ENCODE measurements at regions of chr15 and their contacts with region 1.

Region 1: GRCh38 chr15:70466895-70467529 is 296.3 kb downstream of the UACA start:
- DNase-seq: peak; percentile 79 to 88
- ATAC-seq: peak; percentile 93 to 96
- H3K4me3 ChIP-seq: no peak overlapping the region
- H3K27ac ChIP-seq: 0 out of 6 replicates have a peak overlapping the region, but pooled peaks of 1 of the 2 experiments have one; percentile 7
- H3K4me1 ChIP-seq: peaks cover 13% of the 10 kb centered on the region; the same call in 2 of the 3 replicates
- CTCF ChIP-seq: peak; percentile 84
- EP300 ChIP-seq: no peak
- POLR2A ChIP-seq: no peak
- RAD21 ChIP-seq: peak; percentile 81 to 84

Region 2: DNA sequence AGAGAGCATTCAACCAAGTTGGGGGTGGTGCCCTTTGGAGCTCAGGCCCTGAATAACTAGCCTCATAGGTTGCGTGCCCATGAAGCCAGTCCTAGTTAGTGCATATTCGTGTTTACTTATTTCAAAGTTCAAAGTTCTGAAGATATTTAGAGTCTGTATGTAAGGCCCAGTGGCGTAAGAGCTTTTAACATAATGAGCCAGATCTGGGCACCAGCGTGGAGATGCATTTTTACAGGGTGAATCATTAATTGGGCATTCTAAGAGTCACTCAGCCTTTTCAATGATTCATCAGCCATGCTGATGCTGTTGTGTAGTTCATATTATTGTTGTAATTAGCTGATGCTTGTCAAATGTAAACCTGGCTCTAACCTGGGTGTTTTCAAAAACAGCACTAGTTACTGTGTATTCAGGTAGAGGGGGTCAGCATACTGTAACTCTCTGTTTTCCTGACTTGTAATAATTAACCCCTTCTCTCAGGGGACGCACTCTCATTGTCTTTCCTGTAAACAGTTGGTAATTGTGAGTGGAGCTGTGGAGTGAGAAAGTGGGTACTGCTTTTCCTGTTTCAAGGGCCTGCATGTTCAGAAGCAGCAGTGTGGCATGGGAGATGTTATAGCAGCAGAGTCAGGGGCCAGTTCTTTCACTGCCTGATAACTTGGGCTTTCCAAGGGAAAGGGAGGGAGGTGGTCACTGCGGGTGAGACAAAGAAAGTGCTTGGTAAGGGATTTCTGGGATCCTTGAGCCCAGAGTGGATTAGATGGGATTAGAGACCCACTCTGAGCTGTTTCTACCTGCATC is 909.5 kb before region 1 on chr15:
- CTCF ChIA-PET with region 1: interaction called, 12 read pairs
- POLR2A ChIA-PET with region 1: no interaction called
- DNase-seq: peak; percentile 91 to 96
- ATAC-seq: peak; percentile 75 to 85
- H3K4me3 ChIP-seq: no peak overlapping the region; the same call in 2 of the 3 replicates
- H3K27ac ChIP-seq: peak overlapping the region; percentile 82 to 87
- H3K4me1 ChIP-seq: peaks cover 83% of the 10 kb centered on the region
- CTCF ChIP-seq: no peak
- EP300 ChIP-seq: peak; percentile 87 to 96; a peak in 4 of 5 replicates
- POLR2A ChIP-seq: no peak
- RAD21 ChIP-seq: peak; percentile 5 to 57; a peak in 3 of 5 replicates

Region 3: GRCh38 chr15:70097337-70098169 is 369.5 kb before region 1 on chr15 and contains the start of gene TLE3:
- CTCF ChIA-PET with region 1: interaction called, 59 read pairs
- POLR2A ChIA-PET with region 1: interaction called, 6 read pairs
- DNase-seq: peak; percentile 98 to 100
- ATAC-seq: peak; percentile 64 to 80
- H3K4me3 ChIP-seq: peak within 1 kb of the TSS; percentile 72
- H3K27ac ChIP-seq: peak within 1 kb of the TSS; percentile 87 to 91
- H3K4me1 ChIP-seq: peaks cover 46% of the 10 kb centered on the region
- CTCF ChIP-seq: peak; percentile 47
- EP300 ChIP-seq: no peak
- POLR2A ChIP-seq: peak; percentile 83
- RAD21 ChIP-seq: peak; percentile 61 to 77
- polyA plus RNA-seq, gene TLE3: 4.6 and 6.6 TPM in 2 replicates

Region 4: DNA sequence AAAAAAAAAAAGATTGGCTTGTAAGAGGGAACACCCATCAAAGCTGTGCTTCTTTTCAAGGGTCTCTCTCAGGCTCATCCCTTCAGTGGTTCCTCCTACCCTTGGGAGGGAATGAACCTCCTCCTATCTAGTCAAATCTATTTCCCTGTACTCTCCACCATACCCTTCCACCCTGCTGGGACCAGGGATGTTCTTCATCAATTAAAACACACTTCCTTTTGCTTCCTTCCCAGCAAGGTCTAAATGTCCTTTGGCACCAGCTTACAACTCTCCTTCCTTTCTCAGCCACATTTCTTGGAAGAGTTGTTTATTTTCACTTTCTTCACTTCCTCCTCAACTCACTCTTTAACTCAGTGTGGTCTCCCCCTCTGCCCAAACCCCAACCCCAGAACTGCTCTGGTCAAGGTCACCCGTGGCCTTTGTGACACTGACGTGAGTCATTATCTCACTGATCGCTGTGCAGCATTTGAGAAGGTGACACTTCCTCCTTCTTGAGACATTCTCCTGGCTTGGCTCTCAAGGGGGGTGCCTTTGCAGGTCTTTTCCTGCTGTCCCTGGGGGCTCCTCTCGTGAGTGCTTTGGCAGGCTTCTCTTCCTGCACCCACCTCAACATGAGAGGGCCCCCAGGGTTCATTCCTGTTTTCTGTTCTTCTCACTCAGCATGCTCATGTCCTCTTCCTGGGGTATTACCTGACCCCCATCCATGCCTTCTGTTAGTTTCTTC is 158.8 kb before region 1 on chr15:
- CTCF ChIA-PET with region 1: no interaction called
- POLR2A ChIA-PET with region 1: no interaction called
- DNase-seq: peak; percentile 28 to 38
- ATAC-seq: peak; percentile 44 to 51; a peak in 3 of 6 replicates
- H3K4me3 ChIP-seq: no peak overlapping the region
- H3K27ac ChIP-seq: no peak overlapping the region
- H3K4me1 ChIP-seq: peaks cover 8% of the 10 kb centered on the region
- CTCF ChIP-seq: no peak
- EP300 ChIP-seq: no peak
- POLR2A ChIP-seq: no peak
- RAD21 ChIP-seq: no peak

Region 5: DNA sequence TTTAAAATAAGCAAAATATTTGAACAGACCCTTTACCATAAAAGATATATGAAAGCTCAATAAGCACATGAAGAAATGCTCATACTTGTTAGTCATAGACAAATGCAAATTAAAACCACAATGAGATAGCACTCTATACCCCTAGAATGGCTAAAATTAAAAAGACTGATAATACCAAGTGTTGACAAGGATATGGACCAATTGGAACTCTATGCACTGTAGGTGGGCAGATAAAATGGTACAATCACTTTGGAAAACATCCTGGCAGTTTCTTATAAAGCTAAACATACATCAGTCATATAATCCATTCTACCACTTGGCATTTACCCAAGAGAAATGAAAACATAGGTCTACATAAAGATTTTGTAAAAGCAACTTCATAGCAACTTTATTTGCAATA is 76.3 kb before region 1 on chr15:
- CTCF ChIA-PET with region 1: interaction called, 10 read pairs
- POLR2A ChIA-PET with region 1: no interaction called
- DNase-seq: no peak
- ATAC-seq: no peak
- H3K4me3 ChIP-seq: no peak overlapping the region
- H3K27ac ChIP-seq: no peak overlapping the region
- H3K4me1 ChIP-seq: no peaks in the 10 kb centered on the region
- CTCF ChIP-seq: no peak
- EP300 ChIP-seq: no peak
- POLR2A ChIP-seq: no peak
- RAD21 ChIP-seq: no peak

Region 6: DNA sequence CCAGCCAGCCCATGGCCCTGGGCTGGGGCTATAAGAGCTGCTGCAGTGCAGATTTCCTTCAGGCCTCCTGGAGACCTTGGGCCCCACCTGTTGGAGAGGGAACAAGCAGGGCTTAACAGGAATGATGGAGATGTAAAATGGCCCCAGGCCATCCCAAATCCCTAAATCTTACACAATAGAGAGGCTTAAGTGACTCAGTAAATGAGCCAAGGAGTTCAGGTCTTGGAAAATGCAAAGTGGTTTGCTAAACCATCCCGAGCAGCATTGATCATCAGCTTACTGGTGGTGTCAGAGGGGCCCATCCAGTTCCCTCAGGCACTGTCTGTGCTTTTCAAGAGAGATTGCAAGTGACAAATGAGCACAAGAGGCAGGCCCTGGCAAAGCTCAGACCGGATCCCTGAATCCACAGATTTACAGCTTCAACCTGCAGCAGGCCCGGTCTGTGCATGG is 29.1 kb before region 1 on chr15:
- CTCF ChIA-PET with region 1: interaction called, 18 read pairs
- POLR2A ChIA-PET with region 1: no interaction called
- DNase-seq: peak in 1 of 2 experiments; percentile 14
- ATAC-seq: peak; percentile 27 to 44; a peak in 3 of 6 replicates
- H3K4me3 ChIP-seq: no peak overlapping the region
- H3K27ac ChIP-seq: peak overlapping the region in 1 of 2 experiments; percentile 21; a peak in 1 of 6 replicates
- H3K4me1 ChIP-seq: peaks cover 9% of the 10 kb centered on the region; the same call in 2 of the 3 replicates
- CTCF ChIP-seq: no peak
- EP300 ChIP-seq: no peak
- POLR2A ChIP-seq: no peak
- RAD21 ChIP-seq: 0 out of 5 replicates have a peak, but pooled peaks of 1 of the 2 experiments have one; percentile 20

Region 7: DNA sequence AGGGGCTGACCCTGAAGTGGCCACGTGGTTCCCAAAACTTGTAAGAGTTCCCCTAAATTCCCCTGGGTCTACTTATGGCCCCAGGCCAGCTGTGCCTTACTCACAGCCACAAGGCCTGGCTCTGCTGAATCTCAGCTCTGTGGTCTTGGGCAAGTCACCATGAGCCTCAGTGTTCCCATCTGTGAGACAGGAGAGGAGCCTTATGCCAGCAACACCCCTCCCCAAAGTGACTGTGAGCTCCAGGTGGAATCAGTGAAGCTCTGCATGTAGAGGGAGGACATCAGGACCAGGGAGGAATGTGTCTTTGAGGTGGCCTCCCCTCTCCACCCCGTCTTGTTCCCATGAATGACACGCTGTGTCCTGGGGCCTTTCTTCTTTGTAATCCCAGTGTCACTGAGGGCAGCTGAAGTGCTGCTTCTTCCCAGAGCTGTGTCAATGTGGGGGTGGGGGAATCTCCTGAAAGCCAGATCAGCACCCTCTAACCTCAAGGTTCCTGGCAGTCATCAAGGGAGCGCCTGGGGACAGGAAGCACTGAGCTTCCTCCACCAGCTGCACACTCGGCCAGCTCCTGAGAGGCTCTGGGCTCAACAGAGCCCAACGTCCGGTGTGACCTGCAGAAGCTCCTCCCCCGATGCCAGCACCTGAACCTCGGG is 37.4 kb after region 1 on chr15:
- CTCF ChIA-PET with region 1: interaction called, 15 read pairs
- POLR2A ChIA-PET with region 1: no interaction called
- DNase-seq: peak in 1 of 2 experiments; percentile 73
- ATAC-seq: no peak
- H3K4me3 ChIP-seq: no peak overlapping the region
- H3K27ac ChIP-seq: peak overlapping the region; percentile 93 to 96
- H3K4me1 ChIP-seq: peaks cover 62% of the 10 kb centered on the region
- CTCF ChIP-seq: no peak
- EP300 ChIP-seq: no peak
- POLR2A ChIP-seq: no peak
- RAD21 ChIP-seq: no peak

Region 8: GRCh38 chr15:70763120-70763878 is 296.3 kb after region 1 on chr15 and contains the start of gene UACA:
- CTCF ChIA-PET with region 1: no interaction called
- POLR2A ChIA-PET with region 1: no interaction called
- DNase-seq: peak; percentile 98 to 99
- ATAC-seq: peak; percentile 92 to 95
- H3K4me3 ChIP-seq: peak within 1 kb of the TSS; percentile 93
- H3K27ac ChIP-seq: peak within 1 kb of the TSS; percentile 92 to 95
- H3K4me1 ChIP-seq: peaks cover 49% of the 10 kb centered on the region
- CTCF ChIP-seq: no peak
- EP300 ChIP-seq: no peak
- POLR2A ChIP-seq: peak; percentile 91
- RAD21 ChIP-seq: peak in 1 of 2 experiments; percentile 13; a peak in 1 of 5 replicates
- polyA plus RNA-seq, gene UACA: 80.4 and 81.1 TPM in 2 replicates